Endothelial cell of umbilical vein (primary cell): ENCODE measurements at regions of chr3 and their contacts with region 1.

Region 1: DNA sequence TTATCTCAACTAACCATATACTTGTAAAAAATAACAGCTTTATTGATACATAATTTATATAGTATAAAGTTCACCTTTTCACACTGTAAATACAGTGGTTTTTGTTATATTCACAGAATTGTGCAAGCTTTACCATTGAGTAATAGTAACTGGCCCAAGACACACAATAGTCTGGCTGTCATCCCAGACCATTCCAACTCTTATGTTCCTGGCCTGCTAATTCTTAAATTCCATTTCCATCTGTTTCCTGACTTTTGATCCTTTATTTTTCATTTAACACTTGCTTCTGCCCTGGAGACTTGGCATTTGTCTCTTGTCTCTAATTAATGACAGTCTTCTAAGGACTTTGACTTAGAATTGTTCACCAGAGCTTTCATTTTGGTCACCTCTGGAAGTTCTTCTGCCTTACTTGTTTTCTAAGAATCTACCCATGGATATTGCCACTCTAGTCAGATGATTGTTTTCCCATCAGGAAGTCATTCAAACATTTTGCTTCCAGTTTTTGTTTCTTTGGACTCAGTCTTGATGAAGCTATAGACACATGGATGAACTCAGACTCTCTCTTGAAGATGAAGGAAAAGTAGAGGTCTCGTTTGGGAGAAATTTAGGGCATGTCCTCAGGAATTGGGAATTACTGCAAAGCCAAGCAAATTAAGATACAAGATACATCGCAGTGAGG is 27.2 kb upstream of the PLSCR4 start:
- DNase-seq: peak; percentile 97
- H3K4me3 ChIP-seq: no peak overlapping the region
- H3K27ac ChIP-seq: peak overlapping the region; percentile 89
- H3K4me1 ChIP-seq: peaks cover 57% of the 10 kb centered on the region
- H3K27me3 ChIP-seq: no peaks in the 10 kb centered on the region
- CTCF ChIP-seq: no peak
- POLR2A ChIP-seq: peak; percentile 66

Region 2: DNA sequence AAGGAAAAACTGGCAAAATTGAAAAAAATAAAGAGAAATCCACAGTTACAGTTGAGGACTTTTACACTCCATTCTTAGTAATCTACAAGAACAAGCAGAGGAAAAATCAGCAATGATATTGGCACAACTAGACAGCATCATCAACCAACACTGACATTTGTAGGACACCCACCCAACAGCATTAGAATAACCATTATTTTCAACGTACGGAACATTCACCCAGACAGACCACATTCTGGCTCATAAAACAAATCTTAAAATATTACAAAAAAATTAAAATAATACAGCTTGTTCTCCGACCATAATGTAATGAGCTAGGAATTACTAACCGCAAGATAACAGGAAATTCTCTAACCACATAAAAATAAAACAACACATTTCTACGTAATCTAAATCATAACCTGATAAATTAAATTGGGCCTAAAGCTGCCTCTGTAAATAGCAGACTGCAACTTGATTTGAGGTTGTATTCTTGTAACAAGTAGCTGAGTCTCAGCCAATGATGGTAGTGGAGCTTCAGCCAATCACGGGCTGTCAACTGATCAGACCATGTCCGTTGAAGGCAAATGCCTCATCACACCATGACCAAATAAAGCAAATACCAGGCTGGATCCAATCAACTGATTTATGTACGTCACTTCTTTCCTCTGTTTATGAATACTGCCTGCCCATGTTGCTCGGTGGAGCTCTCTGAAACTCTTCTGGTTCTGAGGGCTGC is 36.4 kb before region 1 on chr3:
- CTCF ChIA-PET with region 1: interaction called, 3 read pairs
- POLR2A ChIA-PET with region 1: interaction called, 3 read pairs
- dilution Hi-C with region 1: no loop called
- intact Hi-C with region 1: loop called (anchors 5 kb)
- DNase-seq: peak; percentile 59
- H3K4me3 ChIP-seq: no peak overlapping the region
- H3K27ac ChIP-seq: peak overlapping the region; percentile 71
- H3K4me1 ChIP-seq: peaks cover 13% of the 10 kb centered on the region
- H3K27me3 ChIP-seq: no peaks in the 10 kb centered on the region
- CTCF ChIP-seq: no peak
- POLR2A ChIP-seq: peak; percentile 29

Region 3: DNA sequence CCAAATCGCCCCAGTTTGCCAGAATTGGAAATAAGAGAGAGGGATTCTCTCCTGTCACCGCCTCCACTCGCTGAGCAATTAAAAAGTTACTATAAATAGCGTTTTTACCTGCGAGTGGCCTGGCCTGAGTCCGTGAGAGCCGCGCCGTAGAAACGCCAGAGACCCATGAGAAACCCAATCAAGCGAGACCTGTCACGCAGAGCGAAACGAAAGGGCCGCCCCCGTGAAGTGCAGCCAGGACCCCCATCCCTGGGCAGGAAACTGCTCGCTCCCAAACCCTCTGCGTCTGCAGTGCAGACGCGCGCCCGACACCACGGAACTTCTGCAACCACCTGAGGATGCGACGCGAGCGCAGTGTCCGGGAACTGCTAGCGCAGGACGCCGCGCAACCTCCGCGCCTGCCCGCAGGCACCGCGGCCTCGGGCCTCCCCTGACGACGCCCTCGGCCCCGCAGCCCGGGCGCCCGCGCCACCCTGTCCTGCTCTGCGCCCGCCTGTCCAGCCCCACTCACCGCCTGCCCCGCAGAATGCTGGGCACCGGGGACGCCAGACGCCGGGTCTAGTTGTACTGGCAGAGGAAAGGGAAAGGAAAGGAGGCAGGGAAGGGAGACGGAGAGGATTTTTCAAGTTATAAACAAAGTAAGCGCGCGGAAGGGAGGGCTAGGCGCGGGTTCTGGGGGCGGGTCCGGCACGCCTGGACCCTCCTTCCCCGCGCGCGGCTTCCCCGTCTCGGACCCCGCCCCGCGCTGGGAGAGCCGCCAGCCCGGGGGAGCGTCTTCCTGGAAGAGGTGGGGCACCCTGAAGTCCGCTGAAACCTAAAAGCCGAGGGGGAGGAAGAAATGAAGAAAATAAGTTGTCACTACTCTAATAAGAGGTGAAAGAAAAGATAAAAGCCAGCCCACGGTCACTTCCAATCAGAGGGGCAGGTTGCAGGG is 27.4 kb before region 1 on chr3 and contains the start of gene PLSCR4:
- CTCF ChIA-PET with region 1: interaction called, 3 read pairs
- POLR2A ChIA-PET with region 1: interaction called, 3 read pairs
- dilution Hi-C with region 1: no loop called
- intact Hi-C with region 1: loop called (anchors 1 kb)
- DNase-seq: peak; percentile 93
- H3K4me3 ChIP-seq: peak within 1 kb of the TSS; percentile 94 to 97 (median 96)
- H3K27ac ChIP-seq: peak within 1 kb of the TSS; percentile 77
- H3K4me1 ChIP-seq: peaks cover 36% of the 10 kb centered on the region
- H3K27me3 ChIP-seq: no peaks in the 10 kb centered on the region
- CTCF ChIP-seq: no peak
- POLR2A ChIP-seq: peak; percentile 35
- total RNA-seq, gene PLSCR4: 81.5 and 91.8 TPM in 2 replicates

Region 4: GRCh38 chr3:146503461-146504202 is 225.5 kb after region 1 on chr3:
- CTCF ChIA-PET with region 1: no interaction called
- POLR2A ChIA-PET with region 1: no interaction called
- dilution Hi-C with region 1: no loop called
- intact Hi-C with region 1: loop called (anchors 1 kb)
- DNase-seq: peak; percentile 45
- H3K4me3 ChIP-seq: no peak overlapping the region
- H3K27ac ChIP-seq: no peak overlapping the region
- H3K4me1 ChIP-seq: peaks cover 35% of the 10 kb centered on the region
- H3K27me3 ChIP-seq: no peaks in the 10 kb centered on the region
- CTCF ChIP-seq: no peak
- POLR2A ChIP-seq: no peak